ENCODE measurements at regions of chr11 and their contacts with region 1.

Region 1: GRCh38 chr11:62747475-62748160 is 6.3 kb downstream of the ZBTB3 start:
- DNase-seq: no peak
- ATAC-seq: no peak
- H3K4me3 ChIP-seq: no peak overlapping the region
- H3K27ac ChIP-seq: no peak overlapping the region
- H3K4me1 ChIP-seq: no peaks in the 10 kb centered on the region; the same call in 1 of the 2 replicates
- H3K27me3 ChIP-seq: no peaks in the 10 kb centered on the region
- CTCF ChIP-seq: no peak

Region 2: GRCh38 chr11:62678770-62679696 is 68.6 kb before region 1 on chr11 and contains the start of gene UBXN1:
- CTCF ChIA-PET with region 1: no interaction called
- POLR2A ChIA-PET with region 1: interaction called, 18 read pairs
- in situ Hi-C with region 1: no loop called
- intact Hi-C with region 1: no loop called
- DNase-seq: no peak
- ATAC-seq: peak; percentile 90
- H3K4me3 ChIP-seq: peak within 1 kb of the TSS; percentile 82 to 87
- H3K27ac ChIP-seq: peak within 1 kb of the TSS; percentile 82
- H3K4me1 ChIP-seq: peaks cover 11% of the 10 kb centered on the region
- H3K27me3 ChIP-seq: no peaks in the 10 kb centered on the region
- CTCF ChIP-seq: no peak
- total RNA-seq, gene UBXN1: 105 TPM

Region 3: GRCh38 chr11:63687845-63688244 is 940.2 kb after region 1 on chr11:
- CTCF ChIA-PET with region 1: no interaction called
- POLR2A ChIA-PET with region 1: no interaction called
- in situ Hi-C with region 1: no loop called
- intact Hi-C with region 1: no loop called
- DNase-seq: no peak
- ATAC-seq: no peak
- H3K4me3 ChIP-seq: no peak overlapping the region
- H3K27ac ChIP-seq: no peak overlapping the region
- H3K4me1 ChIP-seq: peaks cover 13% of the 10 kb centered on the region; the same call in 1 of the 2 replicates
- H3K27me3 ChIP-seq: no peaks in the 10 kb centered on the region
- CTCF ChIP-seq: no peak

Measured in Panc1 (cell line).